ENCODE measurements at regions of chr6 and their contacts with region 1.

Region 1: GRCh38 chr6:111873178-111874024 is at the start of gene FYN:
- DNase-seq: peak; percentile 99
- ATAC-seq: peak; percentile 99
- total RNA-seq, gene FYN: 51.6 TPM

Region 2: DNA sequence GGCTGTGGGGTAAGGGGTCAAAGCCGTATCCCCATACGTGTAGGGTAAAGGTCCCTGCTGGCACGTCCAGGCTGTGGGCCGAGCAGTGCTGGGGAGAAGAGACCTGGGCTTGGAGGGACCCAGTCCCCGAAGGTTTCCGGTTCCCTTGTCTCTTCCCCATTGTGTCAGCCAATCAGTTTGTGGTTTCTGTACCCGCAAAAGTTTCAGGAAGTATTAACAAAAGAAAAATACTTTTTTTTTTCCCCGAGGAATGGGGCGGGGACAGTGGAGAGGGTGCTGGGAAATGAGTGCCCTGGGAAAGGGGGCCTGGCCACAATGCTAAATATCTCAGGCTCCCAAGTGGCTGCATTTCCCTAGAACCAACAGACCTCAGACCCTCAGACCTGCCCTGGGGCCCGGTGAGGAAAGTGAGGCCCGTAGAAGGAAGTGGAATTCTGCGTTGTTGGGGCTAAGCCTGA is 1014.0 kb before region 1 on chr6:
- intact Hi-C with region 1: no loop called
- DNase-seq: no peak
- ATAC-seq: peak; percentile 29

Region 3: DNA sequence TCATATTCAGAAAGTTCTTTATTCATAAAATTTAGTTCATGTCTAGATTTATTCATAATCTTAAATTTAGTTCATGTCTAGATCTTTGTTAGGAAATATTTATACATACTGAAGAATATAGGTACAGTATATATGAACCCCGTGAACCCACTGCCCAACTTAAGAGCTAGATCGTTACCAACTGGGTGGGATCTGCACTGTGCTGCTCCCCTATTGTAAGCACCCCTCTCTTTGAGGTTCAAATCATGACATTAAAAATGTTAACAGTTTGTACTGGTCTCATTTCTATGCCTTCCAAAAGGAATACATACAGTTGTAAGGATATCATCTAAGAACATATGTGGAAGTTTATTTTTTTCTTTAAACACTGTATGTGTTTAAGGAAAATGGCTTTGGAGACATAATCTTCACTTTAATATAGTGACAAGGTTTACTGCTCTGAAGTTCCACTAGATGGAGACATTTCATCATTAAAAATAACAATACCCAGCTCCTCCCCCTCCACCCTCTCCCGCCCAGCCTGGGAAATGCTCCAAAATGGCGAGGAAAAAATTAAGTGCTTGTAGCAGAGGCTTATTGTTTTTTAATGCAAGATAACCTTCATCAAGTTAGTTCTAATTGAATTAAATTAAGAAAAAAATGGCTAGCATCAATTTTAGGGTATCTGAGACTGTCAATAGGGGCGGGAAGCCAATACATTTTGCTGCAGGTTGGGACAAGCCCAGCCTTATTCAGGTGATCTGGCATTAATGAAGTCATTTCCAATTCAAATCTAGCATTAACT is 163.6 kb before region 1 on chr6:
- intact Hi-C with region 1: loop called (anchors 10 kb)
- DNase-seq: peak; percentile 57
- ATAC-seq: peak; percentile 81

Region 4: GRCh38 chr6:111818539-111819226 is 54.7 kb before region 1 on chr6:
- intact Hi-C with region 1: no loop called
- DNase-seq: no peak
- ATAC-seq: peak; percentile 31

Region 5: GRCh38 chr6:111997078-111997852 is 123.9 kb after region 1 on chr6:
- intact Hi-C with region 1: loop called (anchors 10 kb)
- DNase-seq: peak; percentile 87
- ATAC-seq: peak; percentile 93